ENCODE measurements at regions of chr6 and their contacts with region 1.

Region 1: DNA sequence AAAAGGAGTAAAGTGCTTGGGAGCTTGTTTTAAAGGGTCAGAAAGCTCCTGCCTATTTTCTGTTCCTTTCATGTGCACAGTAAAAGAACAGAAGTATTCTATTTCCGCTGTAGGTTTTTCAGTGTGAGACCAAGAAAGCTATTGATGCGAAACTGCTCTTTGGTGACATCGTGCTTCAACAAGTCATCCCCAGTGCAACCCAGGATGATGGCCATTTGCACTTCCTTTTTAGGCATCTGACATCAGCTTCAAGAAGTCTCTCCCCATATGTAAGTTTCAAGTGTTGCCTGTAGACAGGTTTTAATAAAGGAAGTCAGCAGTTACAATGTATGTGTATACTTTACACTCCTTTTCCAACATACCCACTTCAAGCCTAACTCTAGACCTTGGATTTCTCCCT is 131.6 kb downstream of the RFX6 start:
- DNase-seq: no peak
- ATAC-seq: no peak
- H3K4me3 ChIP-seq: no peak overlapping the region
- H3K27ac ChIP-seq: no peak overlapping the region
- H3K4me1 ChIP-seq: no peaks in the 10 kb centered on the region
- H3K27me3 ChIP-seq: no peaks in the 10 kb centered on the region
- CTCF ChIP-seq: no peak

Region 2: DNA sequence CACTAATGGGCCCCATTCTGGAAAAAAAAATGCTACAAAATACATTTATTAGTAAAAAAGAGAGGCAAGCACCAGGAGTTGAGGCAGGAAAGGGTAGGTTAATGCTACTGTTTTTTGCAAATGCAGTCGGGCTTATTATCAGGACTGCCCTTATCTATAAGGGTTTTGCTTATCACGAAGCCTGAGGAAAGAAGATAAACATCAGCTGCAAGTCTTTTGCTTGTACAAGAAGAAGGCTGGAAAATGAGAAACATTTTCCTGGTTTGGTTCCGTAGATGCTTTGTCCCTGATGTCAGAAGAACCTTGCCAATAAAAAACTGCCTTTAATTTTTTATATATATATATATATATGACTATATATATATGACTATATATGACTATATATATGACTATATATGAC is 67.5 kb after region 1 on chr6:
- intact Hi-C with region 1: loop called in 1 of 2 experiments (anchors 2 kb)
- DNase-seq: no peak
- ATAC-seq: no peak
- H3K4me3 ChIP-seq: no peak overlapping the region
- H3K27ac ChIP-seq: no peak overlapping the region
- H3K4me1 ChIP-seq: no peaks in the 10 kb centered on the region
- H3K27me3 ChIP-seq: no peaks in the 10 kb centered on the region
- CTCF ChIP-seq: no peak

Measured in psoas muscle (tissue), 8 donors.